ENCODE measurements at regions of chr6 and their contacts with region 1.

Region 1: GRCh38 chr6:66048684-66049474 is 341.9 kb upstream of the EYS start:
- DNase-seq: no peak
- H3K4me3 ChIP-seq: no peak overlapping the region
- H3K27ac ChIP-seq: no peak overlapping the region
- H3K4me1 ChIP-seq: no peaks in the 10 kb centered on the region
- H3K27me3 ChIP-seq: no peaks in the 10 kb centered on the region
- CTCF ChIP-seq: no peak
- POLR2A ChIP-seq: no peak

Region 2: GRCh38 chr6:65984089-65984488 is 64.8 kb before region 1 on chr6:
- CTCF ChIA-PET with region 1: no interaction called
- POLR2A ChIA-PET with region 1: no interaction called
- dilution Hi-C with region 1: no loop called
- intact Hi-C with region 1: loop called (anchors 2 kb)
- DNase-seq: no peak
- H3K4me3 ChIP-seq: no peak overlapping the region
- H3K27ac ChIP-seq: no peak overlapping the region
- H3K4me1 ChIP-seq: no peaks in the 10 kb centered on the region
- H3K27me3 ChIP-seq: no peaks in the 10 kb centered on the region
- CTCF ChIP-seq: no peak
- POLR2A ChIP-seq: no peak

Region 3: GRCh38 chr6:66096679-66097078 is 47.8 kb after region 1 on chr6:
- CTCF ChIA-PET with region 1: no interaction called
- POLR2A ChIA-PET with region 1: no interaction called
- dilution Hi-C with region 1: no loop called
- intact Hi-C with region 1: no loop called
- DNase-seq: no peak
- H3K4me3 ChIP-seq: no peak overlapping the region
- H3K27ac ChIP-seq: no peak overlapping the region
- H3K4me1 ChIP-seq: no peaks in the 10 kb centered on the region
- H3K27me3 ChIP-seq: no peaks in the 10 kb centered on the region
- CTCF ChIP-seq: no peak
- POLR2A ChIP-seq: no peak

Measured in endothelial cell of umbilical vein (primary cell).